GM13977 (cell line): ENCODE measurements at regions of chr7 and their contacts with region 1.

Region 1: GRCh38 chr7:122515404-122515803 is 183.5 kb downstream of the RNF133 start:
- DNase-seq: no peak
- CTCF ChIP-seq: no peak

Region 2: DNA sequence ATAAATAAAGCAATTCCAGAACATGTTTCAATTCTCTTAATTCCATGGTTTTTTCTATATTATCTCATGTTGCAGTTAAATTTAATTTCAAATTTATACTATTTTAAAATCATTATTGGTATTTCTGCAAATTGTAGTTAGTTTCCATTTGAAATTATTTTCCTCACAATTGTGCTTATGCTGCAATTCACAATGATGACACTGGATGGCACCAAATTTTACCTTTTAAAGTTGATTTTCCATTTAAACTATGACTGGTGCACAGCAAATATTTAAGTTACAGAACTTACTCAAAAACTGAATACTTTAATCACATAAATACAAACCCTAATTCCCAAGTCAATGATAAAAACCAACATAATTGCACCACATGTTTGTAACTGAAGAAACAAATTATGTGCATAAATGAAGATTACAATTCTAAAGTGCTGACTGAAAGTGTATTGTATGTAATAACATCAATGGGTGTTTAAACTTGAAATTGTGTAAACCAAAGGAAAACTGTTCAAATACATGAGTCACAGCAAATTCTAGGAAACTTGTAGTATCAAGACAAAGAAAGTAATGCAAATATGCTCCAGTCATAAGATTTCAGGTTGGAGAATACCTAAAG is 296.0 kb before region 1 on chr7:
- in situ Hi-C with region 1: loop called (anchors 25 kb)
- DNase-seq: no peak
- CTCF ChIP-seq: peak; percentile 57

Region 3: GRCh38 chr7:122290476-122290875 is 224.9 kb before region 1 on chr7:
- in situ Hi-C with region 1: no loop called
- DNase-seq: no peak
- CTCF ChIP-seq: no peak